Aorta (tissue), 5 donors: ENCODE measurements at regions of chr22 and their contacts with region 1.

Region 1: DNA sequence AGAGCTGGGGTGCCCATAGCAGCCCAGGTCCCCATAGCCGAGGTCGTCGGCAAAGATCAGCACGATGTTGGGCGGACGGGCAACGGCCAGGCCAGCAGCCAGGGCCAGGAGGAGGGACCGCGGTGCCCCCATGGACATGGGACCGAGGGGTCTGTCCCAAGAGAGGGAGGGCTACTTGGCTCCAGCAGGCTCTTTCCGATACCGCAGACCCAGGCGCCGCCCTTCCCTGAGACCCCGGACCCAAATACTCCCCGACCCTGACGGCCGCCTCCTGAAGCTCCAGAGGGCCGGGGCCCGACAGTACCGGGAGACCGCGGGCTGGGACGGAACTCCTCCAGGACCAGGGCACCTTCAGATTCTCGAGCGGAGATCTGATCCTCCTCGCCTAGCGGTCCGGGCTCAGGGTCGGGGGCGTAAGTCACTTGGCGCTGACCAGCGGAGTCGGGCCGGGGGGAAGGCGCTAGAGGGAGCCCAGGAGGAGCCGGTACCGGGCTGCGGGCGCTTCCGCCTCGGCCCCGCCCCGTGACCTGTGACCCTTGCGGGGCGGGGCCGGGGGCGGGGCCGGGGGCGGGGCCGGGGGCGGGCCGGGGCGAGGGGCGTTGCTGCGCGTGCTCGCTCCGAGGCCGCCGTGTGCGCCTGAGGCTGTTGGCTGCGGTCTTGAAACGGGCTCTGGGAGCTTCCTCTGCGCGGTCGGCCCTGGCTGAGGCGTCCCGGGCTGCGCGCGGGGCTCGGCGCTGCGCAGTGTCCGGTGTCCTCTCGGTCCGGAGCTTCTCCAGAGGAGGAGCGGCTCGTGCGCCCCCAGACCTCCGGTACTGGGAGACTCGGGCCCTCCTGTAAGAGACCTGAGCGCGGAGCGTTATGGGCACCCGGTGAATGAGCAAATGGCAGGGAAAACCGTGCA is at the start of gene ARSA:
- DNase-seq: peak; percentile 91 to 92
- ATAC-seq: peak; percentile 94
- H3K4me3 ChIP-seq: peak within 1 kb of the TSS; percentile 76 to 82
- H3K27ac ChIP-seq: peak within 1 kb of the TSS in 1 of 2 donors; percentile 19
- H3K4me1 ChIP-seq: no peaks in the 10 kb centered on the region
- H3K27me3 ChIP-seq: no peaks in the 10 kb centered on the region
- total RNA-seq, gene ARSA: 31.4 to 53.5 TPM

Region 2: DNA sequence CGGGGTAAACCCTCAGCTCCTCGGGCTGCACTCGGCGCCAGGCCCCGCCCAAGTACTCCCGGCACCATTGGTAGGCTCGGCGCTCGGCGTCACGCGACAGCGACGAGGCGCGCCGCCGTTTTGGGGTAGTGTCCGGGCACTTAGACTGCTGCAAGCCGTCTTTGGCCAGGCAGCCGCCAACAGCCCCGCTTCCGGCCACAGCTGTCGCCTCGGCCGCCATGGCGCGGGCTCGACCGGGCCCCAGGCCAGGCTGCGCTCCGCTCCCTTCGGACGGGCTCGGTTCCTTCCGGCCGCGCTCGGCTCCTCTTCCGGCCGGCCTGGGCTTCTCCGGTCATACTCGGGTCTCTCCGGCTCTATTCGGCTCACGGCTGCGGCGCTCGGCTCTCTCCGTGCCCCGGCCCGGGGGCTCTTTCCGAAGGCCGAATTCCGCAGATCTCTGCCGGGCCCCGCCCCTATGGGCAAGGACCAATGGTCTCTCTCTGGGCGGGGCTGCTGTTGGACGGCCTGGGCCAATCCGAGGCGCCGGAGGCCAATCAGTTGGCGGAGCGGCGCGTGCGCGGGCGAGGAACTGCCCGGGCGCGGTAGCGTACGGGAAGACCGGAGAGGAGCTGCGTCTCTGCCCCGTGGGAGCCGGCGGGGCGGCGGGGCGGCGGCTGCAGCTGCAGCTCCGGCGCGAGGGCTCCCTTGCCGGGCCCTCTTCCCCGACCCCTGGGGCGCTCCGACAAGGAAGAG is 45.2 kb before region 1 on chr22 and contains the start of gene CHKB:
- intact Hi-C with region 1: loop called in 1 of 2 experiments (anchors 2 kb)
- DNase-seq: peak; percentile 99
- ATAC-seq: peak; percentile 99
- H3K4me3 ChIP-seq: peak within 1 kb of the TSS; percentile 73 to 82
- H3K27ac ChIP-seq: peak within 1 kb of the TSS; percentile 68 to 92
- H3K4me1 ChIP-seq: no peaks in the 10 kb centered on the region
- H3K27me3 ChIP-seq: no peaks in the 10 kb centered on the region
- total RNA-seq, gene CHKB: 36.5 to 78.8 TPM

Region 3: DNA sequence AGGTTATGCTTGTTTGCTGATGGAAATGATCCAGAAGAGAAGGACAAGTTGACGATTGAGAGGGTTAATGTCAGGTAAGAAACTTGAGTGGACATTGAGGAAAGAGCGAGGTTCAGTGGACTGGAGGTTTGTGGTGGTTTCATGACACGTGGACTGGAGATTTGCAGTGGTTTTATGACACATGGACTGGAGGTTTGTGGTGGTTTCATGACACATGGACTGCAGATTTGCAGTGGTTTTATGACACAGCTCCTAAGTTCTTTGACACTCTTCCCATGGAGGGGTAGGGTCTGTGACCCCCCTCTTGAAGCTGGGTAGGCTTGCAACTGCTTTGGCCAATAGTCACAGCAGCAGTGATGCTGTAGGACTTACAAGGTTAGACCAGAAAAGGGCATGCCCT is 32.7 kb before region 1 on chr22:
- intact Hi-C with region 1: no loop called
- DNase-seq: no peak
- ATAC-seq: no peak
- H3K4me3 ChIP-seq: no peak overlapping the region
- H3K27ac ChIP-seq: no peak overlapping the region
- H3K4me1 ChIP-seq: no peaks in the 10 kb centered on the region
- H3K27me3 ChIP-seq: no peaks in the 10 kb centered on the region